A549 (cell line): ENCODE measurements at regions of chr2 and their contacts with region 1.

Region 1: GRCh38 chr2:133780099-133780839 is 212.0 kb upstream of the NCKAP5 start:
- DNase-seq: peak; percentile 28 to 77
- ATAC-seq: peak; percentile 64 to 90; a peak in 5 of 6 replicates
- H3K4me3 ChIP-seq: no peak overlapping the region
- H3K27ac ChIP-seq: peak overlapping the region in 1 of 2 experiments; percentile 68; a peak in 4 of 6 replicates
- H3K4me1 ChIP-seq: peaks cover 13% of the 10 kb centered on the region; the same call in 2 of the 3 replicates
- CTCF ChIP-seq: peak; percentile 80
- EP300 ChIP-seq: no peak
- POLR2A ChIP-seq: no peak
- RAD21 ChIP-seq: peak; percentile 84

Region 2: GRCh38 chr2:133266041-133266925 is 514.0 kb before region 1 on chr2:
- CTCF ChIA-PET with region 1: interaction called, 20 read pairs
- POLR2A ChIA-PET with region 1: no interaction called
- DNase-seq: peak; percentile 49 to 64
- ATAC-seq: peak; percentile 80 to 82
- H3K4me3 ChIP-seq: peak overlapping the region; percentile 74
- H3K27ac ChIP-seq: peak overlapping the region; percentile 89 to 98
- H3K4me1 ChIP-seq: peaks cover 53% of the 10 kb centered on the region
- CTCF ChIP-seq: peak; percentile 21; the same call in 2 of the 3 replicates
- EP300 ChIP-seq: no peak
- POLR2A ChIP-seq: no peak
- RAD21 ChIP-seq: peak; percentile 7 to 11; a peak in 1 of 5 replicates

Region 3: GRCh38 chr2:133568172-133568571 is 212.1 kb before region 1 on chr2 and contains the start of gene NCKAP5:
- CTCF ChIA-PET with region 1: interaction called, 21 read pairs
- POLR2A ChIA-PET with region 1: no interaction called
- DNase-seq: peak; percentile 38 to 42
- ATAC-seq: peak; percentile 79 to 84; a peak in 5 of 6 replicates
- H3K4me3 ChIP-seq: peak within 1 kb of the TSS; percentile 35
- H3K27ac ChIP-seq: peak within 1 kb of the TSS; percentile 26 to 75
- H3K4me1 ChIP-seq: peaks cover 31% of the 10 kb centered on the region
- CTCF ChIP-seq: no peak
- EP300 ChIP-seq: no peak
- POLR2A ChIP-seq: no peak
- RAD21 ChIP-seq: no peak
- polyA plus RNA-seq, gene NCKAP5: 2.9 and 3.0 TPM in 2 replicates

Region 4: GRCh38 chr2:133748007-133748700 is 32.1 kb before region 1 on chr2:
- CTCF ChIA-PET with region 1: no interaction called
- POLR2A ChIA-PET with region 1: no interaction called
- DNase-seq: no peak
- ATAC-seq: no peak
- H3K4me3 ChIP-seq: no peak overlapping the region
- H3K27ac ChIP-seq: no peak overlapping the region
- H3K4me1 ChIP-seq: no peaks in the 10 kb centered on the region
- CTCF ChIP-seq: no peak
- EP300 ChIP-seq: no peak
- POLR2A ChIP-seq: no peak
- RAD21 ChIP-seq: no peak

Region 5: GRCh38 chr2:133765658-133766057 is 14.6 kb before region 1 on chr2:
- CTCF ChIA-PET with region 1: interaction called, 20 read pairs
- POLR2A ChIA-PET with region 1: no interaction called
- DNase-seq: peak in 1 of 2 experiments; percentile 58
- ATAC-seq: peak; percentile 68 to 82; a peak in 5 of 6 replicates
- H3K4me3 ChIP-seq: no peak overlapping the region
- H3K27ac ChIP-seq: peak overlapping the region; percentile 30 to 40; a peak in 3 of 6 replicates
- H3K4me1 ChIP-seq: peaks cover 12% of the 10 kb centered on the region
- CTCF ChIP-seq: no peak
- EP300 ChIP-seq: peak; percentile 21 to 28; a peak in 1 of 5 replicates
- POLR2A ChIP-seq: no peak
- RAD21 ChIP-seq: no peak

Region 6: DNA sequence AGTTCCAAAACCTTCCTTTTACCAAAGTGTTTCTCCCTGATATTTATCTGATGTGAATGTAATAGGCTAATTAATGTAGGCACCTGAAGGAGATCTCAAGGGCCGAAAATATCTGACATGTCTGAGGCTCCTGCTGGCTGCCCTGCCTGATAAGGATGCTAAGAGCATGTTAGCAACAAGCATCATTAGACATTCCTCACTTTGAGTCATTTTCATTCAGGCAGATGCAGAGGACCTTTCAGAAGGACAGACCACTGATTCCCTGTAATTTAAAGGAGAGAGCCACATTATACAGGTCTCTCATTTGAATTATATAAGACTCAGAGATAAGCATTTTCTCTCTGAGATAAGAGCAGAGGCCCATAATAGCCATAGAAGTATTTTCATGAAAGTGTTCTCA is 10.4 kb after region 1 on chr2:
- CTCF ChIA-PET with region 1: interaction called, 13 read pairs
- POLR2A ChIA-PET with region 1: no interaction called
- DNase-seq: no peak
- ATAC-seq: no peak
- H3K4me3 ChIP-seq: no peak overlapping the region
- H3K27ac ChIP-seq: 0 out of 6 replicates have a peak overlapping the region, but pooled peaks of 1 of the 2 experiments have one; percentile 3
- H3K4me1 ChIP-seq: no peaks in the 10 kb centered on the region
- CTCF ChIP-seq: no peak
- EP300 ChIP-seq: no peak
- POLR2A ChIP-seq: no peak
- RAD21 ChIP-seq: no peak